Posterior vena cava (tissue), 2 donors: ENCODE measurements at regions of chr5 and their contacts with region 1.

Region 1: GRCh38 chr5:107127878-107128277 is 542.9 kb downstream of the EFNA5 start:
- DNase-seq: no peak

Region 2: GRCh38 chr5:107203243-107203642 is 75.4 kb after region 1 on chr5:
- intact Hi-C with region 1: loop called in 1 of 2 experiments (anchors 2 kb)
- DNase-seq: no peak

Region 3: GRCh38 chr5:107224272-107224671 is 96.4 kb after region 1 on chr5:
- intact Hi-C with region 1: no loop called
- DNase-seq: no peak